Gastrocnemius medialis (tissue), 4 donors: ENCODE measurements at regions of chr2 and their contacts with region 1.

Region 1: GRCh38 chr2:177187631-177188312 is 24.8 kb upstream of the HNRNPA3 start:
- DNase-seq: no peak
- ATAC-seq: peak; percentile 61 to 80
- H3K4me3 ChIP-seq: no peak overlapping the region
- H3K27ac ChIP-seq: no peak overlapping the region
- H3K4me1 ChIP-seq: no peaks in the 10 kb centered on the region
- H3K27me3 ChIP-seq: no peaks in the 10 kb centered on the region
- CTCF ChIP-seq: no peak
- POLR2A ChIP-seq: no peak

Region 2: DNA sequence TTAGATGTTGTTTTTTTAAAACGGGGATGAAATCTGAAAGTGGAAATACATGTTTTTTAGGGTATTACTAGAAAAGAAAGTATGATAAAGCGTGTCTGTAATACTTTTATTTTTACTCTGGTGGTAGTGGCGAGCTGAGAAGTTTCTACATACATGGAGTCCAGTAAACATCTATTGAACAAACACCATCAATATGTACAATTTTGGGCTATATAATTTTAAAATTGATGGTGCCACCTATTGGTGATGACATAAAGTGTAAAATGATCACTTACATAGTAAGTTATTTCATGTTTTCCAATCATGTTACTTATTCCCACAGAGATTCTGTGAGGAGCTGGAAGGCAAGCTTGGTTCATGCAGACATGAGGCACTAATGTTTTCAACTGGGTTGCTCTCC is 108.3 kb after region 1 on chr2:
- in situ Hi-C with region 1: loop called in 1 of 4 experiments (anchors 25 kb)
- intact Hi-C with region 1: no loop called
- DNase-seq: no peak
- ATAC-seq: peak in 1 of 2 donors; percentile 26
- H3K4me3 ChIP-seq: no peak overlapping the region
- H3K27ac ChIP-seq: peak overlapping the region in 2 of 4 donors; percentile 35 to 41
- H3K4me1 ChIP-seq: peaks cover 0 to 3% of the 10 kb centered on the region in 2 donors
- H3K27me3 ChIP-seq: no peaks in the 10 kb centered on the region
- CTCF ChIP-seq: peak in 3 of 5 experiments; percentile 10 to 50 (median 32)
- POLR2A ChIP-seq: no peak